Spleen (tissue), 13 donors: ENCODE measurements at regions of chr2 and their contacts with region 1.

Region 1: DNA sequence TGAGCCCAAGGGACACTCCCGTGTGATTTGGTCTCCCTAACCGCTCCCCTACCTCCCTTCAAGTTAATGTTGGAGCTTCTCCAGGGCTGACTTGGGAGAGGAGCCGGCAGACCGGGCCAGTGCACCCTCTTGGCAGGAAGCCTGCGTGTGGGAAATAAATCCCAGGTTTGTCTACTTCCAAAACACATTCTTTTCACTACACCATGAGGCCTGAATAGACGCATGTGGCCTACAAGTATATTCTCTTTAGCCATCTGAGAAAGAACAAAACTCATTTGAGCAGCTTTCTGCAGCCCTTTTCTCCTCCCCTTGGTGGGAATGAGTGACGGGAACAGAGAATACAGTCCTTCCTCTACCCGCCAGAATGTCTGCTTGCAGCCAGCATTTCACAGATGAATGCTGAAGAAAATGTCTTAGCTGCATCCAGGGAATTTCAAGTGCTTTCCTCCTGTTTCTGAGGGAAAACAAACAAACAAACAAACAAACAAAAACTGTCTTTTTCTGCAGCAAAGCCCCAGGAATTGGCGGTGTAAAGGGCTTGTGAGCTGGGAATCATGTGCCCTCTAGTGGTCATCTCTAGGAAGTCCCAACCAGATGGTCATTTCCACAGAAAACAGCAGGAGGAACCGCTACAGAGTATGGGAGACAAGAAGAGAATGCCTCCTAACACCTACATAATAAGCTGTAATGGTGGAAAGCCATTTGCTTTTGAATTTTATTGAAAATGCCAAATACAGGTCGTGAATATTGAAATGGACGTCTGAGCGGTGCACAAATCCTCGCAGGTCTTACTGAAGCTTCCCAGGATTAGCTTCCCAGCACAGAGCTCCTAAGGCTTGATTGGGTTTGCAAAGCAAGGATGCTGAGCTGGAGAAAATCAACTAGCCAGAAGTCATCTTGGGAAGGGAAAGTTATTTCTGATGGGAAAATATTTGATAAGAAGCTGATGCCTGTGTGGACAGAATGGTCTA is 41.2 kb upstream of the DAPL1 start:
- DNase-seq: no peak
- H3K4me3 ChIP-seq: peak overlapping the region in 2 of 8 donors; percentile 20 to 48
- H3K27ac ChIP-seq: no peak overlapping the region
- H3K4me1 ChIP-seq: peaks cover 0 to 9% (median 0%) of the 10 kb centered on the region in 6 donors
- H3K27me3 ChIP-seq: peaks cover 0 to 18% (median 0%) of the 10 kb centered on the region in 7 donors
- CTCF ChIP-seq: peak; percentile 49 to 86 (median 82)
- POLR2A ChIP-seq: no peak

Region 2: GRCh38 chr2:158024288-158024898 is 729.5 kb before region 1 on chr2:
- intact Hi-C with region 1: loop called (anchors 5 kb)
- DNase-seq: no peak
- H3K4me3 ChIP-seq: no peak overlapping the region
- H3K27ac ChIP-seq: no peak overlapping the region
- H3K4me1 ChIP-seq: peaks cover 0 to 9% (median 0%) of the 10 kb centered on the region in 6 donors
- H3K27me3 ChIP-seq: no peaks in the 10 kb centered on the region
- CTCF ChIP-seq: peak; percentile 56 to 85 (median 80)
- POLR2A ChIP-seq: no peak

Region 3: GRCh38 chr2:158179660-158180059 is 574.3 kb before region 1 on chr2:
- intact Hi-C with region 1: loop called (anchors 5 kb)
- DNase-seq: no peak
- H3K4me3 ChIP-seq: no peak overlapping the region
- H3K27ac ChIP-seq: no peak overlapping the region
- H3K4me1 ChIP-seq: peaks cover 0 to 7% (median 0%) of the 10 kb centered on the region in 6 donors
- H3K27me3 ChIP-seq: peaks cover 0 to 23% (median 4%) of the 10 kb centered on the region in 7 donors
- CTCF ChIP-seq: peak in 6 of 11 experiments; percentile 9 to 43 (median 28)
- POLR2A ChIP-seq: no peak

Region 4: GRCh38 chr2:159317392-159318088 is 563.6 kb after region 1 on chr2:
- intact Hi-C with region 1: no loop called
- DNase-seq: no peak
- H3K4me3 ChIP-seq: no peak overlapping the region
- H3K27ac ChIP-seq: no peak overlapping the region
- H3K4me1 ChIP-seq: no peaks in the 10 kb centered on the region
- H3K27me3 ChIP-seq: no peaks in the 10 kb centered on the region
- CTCF ChIP-seq: no peak
- POLR2A ChIP-seq: no peak